ENCODE measurements at regions of chr14 and their contacts with region 1.

Region 1: GRCh38 chr14:24673534-24674203 is 39.7 kb upstream of the GZMB start:
- DNase-seq: peak; percentile 82
- H3K4me3 Mint-ChIP-seq: peak overlapping the region; percentile 74
- H3K27ac Mint-ChIP-seq: peak overlapping the region; percentile 96
- H3K4me1 Mint-ChIP-seq: peaks cover 89% of the 10 kb centered on the region
- H3K27me3 Mint-ChIP-seq: no peaks in the 10 kb centered on the region

Region 2: DNA sequence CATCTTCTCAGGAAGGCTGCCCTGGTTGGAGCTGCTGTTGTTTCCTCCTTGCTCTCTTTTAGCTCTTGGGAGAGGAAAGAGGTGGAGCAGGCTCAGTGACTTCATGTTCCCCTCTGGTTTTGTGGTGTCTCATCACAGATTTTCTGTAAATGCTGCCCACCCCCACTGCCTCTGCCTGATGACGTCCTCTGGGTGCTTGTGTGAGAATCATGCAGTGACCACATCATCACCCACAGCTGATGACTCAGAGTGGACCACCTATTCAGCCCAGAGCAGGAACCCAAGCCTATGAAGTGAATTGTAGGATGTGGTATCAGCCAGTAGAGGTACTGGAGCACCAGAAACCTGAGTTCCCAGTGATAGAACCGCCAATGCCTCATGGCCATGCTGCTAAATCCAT is 39.5 kb before region 1 on chr14 and contains the start of gene GZMB:
- CTCF ChIA-PET with region 1: interaction called, 14 read pairs
- DNase-seq: peak; percentile 55
- H3K4me3 Mint-ChIP-seq: peak within 1 kb of the TSS; percentile 35
- H3K27ac Mint-ChIP-seq: peak within 1 kb of the TSS; percentile 12
- H3K4me1 Mint-ChIP-seq: peaks cover 17% of the 10 kb centered on the region
- H3K27me3 Mint-ChIP-seq: peaks cover 7% of the 10 kb centered on the region

Region 3: DNA sequence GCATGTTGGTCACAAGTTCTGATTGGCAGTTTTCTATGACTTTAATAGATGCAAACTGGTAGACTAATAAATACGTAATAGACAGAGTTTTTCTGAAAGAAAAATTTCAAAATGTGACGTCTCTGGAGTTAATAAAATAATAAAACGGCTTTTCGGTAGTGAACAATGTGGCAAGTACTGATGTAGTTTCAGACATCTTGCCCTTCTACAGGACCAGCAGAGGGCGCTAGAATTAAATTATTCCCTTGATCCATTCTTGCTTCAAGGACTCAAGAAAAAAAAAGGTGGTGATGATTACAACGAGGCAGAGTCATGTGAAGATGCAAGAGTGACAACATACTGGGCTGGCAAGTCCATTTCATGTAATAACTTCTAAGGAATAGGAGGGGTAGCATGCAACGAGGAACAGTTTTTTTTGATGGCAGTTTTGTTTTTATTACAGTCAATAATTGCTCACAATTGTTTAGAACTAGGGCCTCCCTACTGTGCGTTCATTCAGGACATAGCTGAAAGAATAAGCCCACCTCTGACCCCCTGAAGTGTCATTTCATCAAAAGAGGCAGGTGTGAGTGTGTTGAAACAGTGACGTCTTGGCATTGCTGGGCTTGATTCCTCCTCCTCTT is 61.3 kb after region 1 on chr14:
- CTCF ChIA-PET with region 1: no interaction called
- DNase-seq: peak; percentile 39
- H3K4me3 Mint-ChIP-seq: no peak overlapping the region
- H3K27ac Mint-ChIP-seq: no peak overlapping the region
- H3K4me1 Mint-ChIP-seq: no peaks in the 10 kb centered on the region
- H3K27me3 Mint-ChIP-seq: peaks cover 14% of the 10 kb centered on the region

Measured in activated naive CD4-positive, alpha-beta T cell treated with anti-CD3 and anti-CD28 coated beads, Interleukin-2, amount 10 ng/mL, durations not matched to agents 7 days and 5 days (primary cell).